ENCODE measurements at regions of chr2 and their contacts with region 1.

Region 1: GRCh38 chr2:222797261-222797660 is 63.6 kb upstream of the ACSL3 start:
- DNase-seq: peak; percentile 39
- H3K4me3 ChIP-seq: no peak overlapping the region
- H3K27ac ChIP-seq: no peak overlapping the region
- H3K4me1 ChIP-seq: peaks cover 51% of the 10 kb centered on the region
- CTCF ChIP-seq: peak; percentile 80

Region 2: DNA sequence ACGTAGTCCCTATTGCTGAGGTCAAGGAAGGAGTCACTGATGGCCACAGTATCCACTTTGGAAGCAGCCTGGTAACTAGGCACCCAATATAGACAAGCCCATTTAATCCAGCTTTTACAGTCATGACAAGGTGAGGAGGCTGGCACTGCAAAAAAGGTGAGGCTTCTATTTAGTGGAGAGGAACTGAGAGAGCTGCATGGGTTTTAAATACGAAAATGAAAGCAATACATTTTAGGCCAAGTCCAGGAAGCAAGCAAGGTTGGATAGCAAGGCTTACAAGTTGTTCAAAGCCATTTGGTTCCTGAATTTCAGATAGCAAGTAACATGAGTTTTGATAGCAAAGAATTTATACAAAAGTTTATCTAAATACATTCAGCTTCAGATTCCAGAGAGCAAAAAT is 292.5 kb before region 1 on chr2:
- CTCF ChIA-PET with region 1: no interaction called
- POLR2A ChIA-PET with region 1: no interaction called
- intact Hi-C with region 1: no loop called
- DNase-seq: no peak
- H3K4me3 ChIP-seq: no peak overlapping the region
- H3K27ac ChIP-seq: no peak overlapping the region
- H3K4me1 ChIP-seq: no peaks in the 10 kb centered on the region
- CTCF ChIP-seq: no peak

Region 3: GRCh38 chr2:222760301-222760897 is 36.9 kb before region 1 on chr2:
- CTCF ChIA-PET with region 1: no interaction called
- POLR2A ChIA-PET with region 1: interaction called, 14 read pairs
- intact Hi-C with region 1: no loop called
- DNase-seq: no peak
- H3K4me3 ChIP-seq: no peak overlapping the region
- H3K27ac ChIP-seq: no peak overlapping the region
- H3K4me1 ChIP-seq: no peaks in the 10 kb centered on the region
- CTCF ChIP-seq: no peak

Measured in OCI-LY7 (cell line).